GM12878 (cell line): ENCODE measurements at regions of chrX and their contacts with region 1.

Region 1: GRCh38 chrX:57121162-57121741 is at the start of gene SPIN2B:
- DNase-seq: peak; percentile 51
- ATAC-seq: peak; percentile 99
- H3K4me3 ChIP-seq: peak within 1 kb of the TSS; percentile 65
- H3K27ac ChIP-seq: peak within 1 kb of the TSS; percentile 65
- H3K4me1 ChIP-seq: no peaks in the 10 kb centered on the region
- H3K27me3 ChIP-seq: no peaks in the 10 kb centered on the region
- CTCF ChIP-seq: no peak
- EP300 ChIP-seq: no peak
- POLR2A ChIP-seq: peak; percentile 86
- RAD21 ChIP-seq: no peak
- polyA plus RNA-seq, gene SPIN2B: 2.7 to 3.7 TPM

Region 2: GRCh38 chrX:56757327-56757726 is 363.9 kb before region 1 on chrX:
- CTCF ChIA-PET with region 1: no interaction called
- POLR2A ChIA-PET with region 1: no interaction called
- RAD21 ChIA-PET with region 1: no interaction called
- SMC1A ChIA-PET with region 1: no interaction called
- in situ Hi-C with region 1: no loop called
- intact Hi-C with region 1: loop called (anchors 10 kb)
- DNase-seq: no peak
- ATAC-seq: peak; percentile 66
- H3K4me3 ChIP-seq: no peak overlapping the region
- H3K27ac ChIP-seq: no peak overlapping the region
- H3K4me1 ChIP-seq: peaks cover 6% of the 10 kb centered on the region
- H3K27me3 ChIP-seq: no peaks in the 10 kb centered on the region
- CTCF ChIP-seq: no peak
- EP300 ChIP-seq: no peak
- POLR2A ChIP-seq: no peak
- RAD21 ChIP-seq: no peak

Region 3: DNA sequence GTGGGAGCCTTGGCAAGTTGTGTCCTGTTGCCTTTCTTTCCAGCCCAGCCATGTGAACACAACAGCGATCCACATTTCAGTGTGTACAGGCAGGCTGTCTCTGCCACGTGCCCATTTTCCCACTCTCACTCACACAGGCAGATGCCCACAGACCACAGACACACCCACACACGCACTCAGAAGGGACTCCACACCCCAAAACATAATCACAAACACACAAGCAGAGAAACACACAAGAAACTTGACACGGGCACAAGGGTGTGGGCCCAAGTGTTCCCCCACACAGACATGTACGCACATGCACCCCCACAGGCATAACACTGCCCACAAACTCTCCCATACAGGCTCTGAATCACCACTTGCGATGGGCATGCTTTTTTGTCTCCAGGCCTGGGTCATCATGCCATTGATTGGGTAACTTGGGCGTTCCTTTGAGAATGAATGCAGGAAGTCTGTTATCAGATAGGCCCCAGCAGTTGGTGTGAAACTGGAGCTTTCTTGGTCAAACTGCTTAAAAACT is 307.9 kb before region 1 on chrX:
- CTCF ChIA-PET with region 1: no interaction called
- POLR2A ChIA-PET with region 1: no interaction called
- RAD21 ChIA-PET with region 1: no interaction called
- SMC1A ChIA-PET with region 1: no interaction called
- in situ Hi-C with region 1: no loop called
- intact Hi-C with region 1: loop called (anchors 10 kb)
- DNase-seq: no peak
- ATAC-seq: peak; percentile 78
- H3K4me3 ChIP-seq: peak overlapping the region; percentile 42; the same call in 1 of the 2 replicates
- H3K27ac ChIP-seq: peak overlapping the region; percentile 76
- H3K4me1 ChIP-seq: peaks cover 8% of the 10 kb centered on the region
- H3K27me3 ChIP-seq: no peaks in the 10 kb centered on the region
- CTCF ChIP-seq: no peak
- EP300 ChIP-seq: no peak
- POLR2A ChIP-seq: no peak
- RAD21 ChIP-seq: no peak

Region 4: DNA sequence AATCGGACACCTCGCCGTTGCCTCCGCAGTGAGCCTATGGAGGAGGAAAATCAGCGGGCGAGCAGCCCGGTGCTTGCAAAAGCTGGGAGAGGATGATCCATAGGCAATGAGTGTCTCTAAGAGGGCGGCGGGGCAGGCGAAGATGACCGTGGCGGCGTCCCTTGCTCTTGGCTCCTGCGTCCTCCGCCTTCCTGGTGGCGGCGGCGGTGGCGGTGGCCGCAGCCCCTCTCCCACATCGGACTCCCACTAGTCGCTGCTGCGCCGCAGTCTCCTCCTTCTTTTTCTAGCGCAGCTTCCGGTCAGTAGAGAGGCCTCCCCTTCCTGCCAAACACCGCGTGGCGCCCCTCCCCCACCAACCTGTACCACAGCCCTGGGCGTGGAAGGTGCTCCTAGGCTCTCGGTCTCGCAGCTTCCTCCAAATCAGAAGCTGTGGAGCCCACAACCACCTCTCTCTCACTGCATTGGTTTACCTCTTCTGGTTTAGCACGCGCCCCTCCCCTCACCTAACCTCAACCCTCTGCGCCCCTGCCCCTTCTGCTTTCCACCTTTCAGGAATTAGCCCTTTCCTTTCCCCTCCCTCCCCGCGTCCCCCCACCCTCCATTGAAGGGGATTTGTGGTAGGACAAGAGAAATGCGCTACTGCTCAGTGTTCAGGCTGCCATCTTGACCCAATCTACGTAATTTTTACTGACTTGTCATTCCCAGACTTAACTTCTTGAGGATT is 125.8 kb before region 1 on chrX and contains the start of gene SPIN3:
- CTCF ChIA-PET with region 1: no interaction called
- POLR2A ChIA-PET with region 1: interaction called, 3 read pairs
- RAD21 ChIA-PET with region 1: interaction called, 3 read pairs
- SMC1A ChIA-PET with region 1: no interaction called
- in situ Hi-C with region 1: loop called (anchors 25 kb)
- intact Hi-C with region 1: loop called (anchors 1 kb)
- DNase-seq: peak; percentile 56
- ATAC-seq: peak; percentile 95
- H3K4me3 ChIP-seq: peak within 1 kb of the TSS; percentile 72
- H3K27ac ChIP-seq: peak within 1 kb of the TSS; percentile 45
- H3K4me1 ChIP-seq: no peaks in the 10 kb centered on the region; the same call in 1 of the 2 replicates
- H3K27me3 ChIP-seq: no peaks in the 10 kb centered on the region
- CTCF ChIP-seq: no peak
- EP300 ChIP-seq: no peak
- POLR2A ChIP-seq: peak; percentile 84
- RAD21 ChIP-seq: no peak
- polyA plus RNA-seq, gene SPIN3: 2.1 to 2.4 TPM

Region 5: DNA sequence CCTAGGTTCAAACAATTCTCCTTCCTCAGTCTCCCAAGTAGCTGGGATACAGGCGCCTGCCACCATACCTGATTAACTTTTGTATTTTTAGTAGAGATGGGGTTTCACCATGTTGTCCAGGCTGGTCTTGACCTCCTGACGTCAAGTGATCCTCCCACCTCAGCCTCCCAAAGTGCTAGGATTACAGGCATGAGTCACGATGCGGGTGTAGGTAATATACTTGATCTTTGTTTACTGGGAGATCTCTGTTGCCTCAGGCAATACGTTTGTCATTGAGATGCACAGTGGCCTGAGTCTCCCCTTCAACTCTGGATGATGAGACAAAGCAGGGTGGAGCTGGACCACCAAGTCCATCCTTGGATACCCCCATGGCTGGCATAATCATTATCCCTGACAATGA is 81.2 kb before region 1 on chrX:
- CTCF ChIA-PET with region 1: no interaction called
- POLR2A ChIA-PET with region 1: no interaction called
- RAD21 ChIA-PET with region 1: no interaction called
- SMC1A ChIA-PET with region 1: no interaction called
- in situ Hi-C with region 1: no loop called
- intact Hi-C with region 1: no loop called
- DNase-seq: no peak
- ATAC-seq: no peak
- H3K4me3 ChIP-seq: no peak overlapping the region
- H3K27ac ChIP-seq: no peak overlapping the region
- H3K4me1 ChIP-seq: no peaks in the 10 kb centered on the region
- H3K27me3 ChIP-seq: no peaks in the 10 kb centered on the region
- CTCF ChIP-seq: no peak
- EP300 ChIP-seq: no peak
- POLR2A ChIP-seq: no peak
- RAD21 ChIP-seq: no peak

Region 6: GRCh38 chrX:57134702-57135101 is 13.4 kb after region 1 on chrX:
- CTCF ChIA-PET with region 1: no interaction called
- POLR2A ChIA-PET with region 1: no interaction called
- RAD21 ChIA-PET with region 1: no interaction called
- SMC1A ChIA-PET with region 1: no interaction called
- in situ Hi-C with region 1: no loop called
- intact Hi-C with region 1: no loop called
- DNase-seq: no peak
- ATAC-seq: no peak
- H3K4me3 ChIP-seq: no peak overlapping the region
- H3K27ac ChIP-seq: no peak overlapping the region
- H3K4me1 ChIP-seq: no peaks in the 10 kb centered on the region
- H3K27me3 ChIP-seq: no peaks in the 10 kb centered on the region
- CTCF ChIP-seq: no peak
- EP300 ChIP-seq: no peak
- POLR2A ChIP-seq: no peak
- RAD21 ChIP-seq: no peak

Region 7: GRCh38 chrX:57286507-57287251 is 165.4 kb after region 1 on chrX and contains the start of gene FAAH2:
- CTCF ChIA-PET with region 1: no interaction called
- POLR2A ChIA-PET with region 1: interaction called, 4 read pairs
- RAD21 ChIA-PET with region 1: interaction called, 3 read pairs
- SMC1A ChIA-PET with region 1: no interaction called
- in situ Hi-C with region 1: no loop called
- intact Hi-C with region 1: loop called (anchors 10 kb)
- DNase-seq: peak; percentile 23
- ATAC-seq: peak; percentile 94
- H3K4me3 ChIP-seq: peak within 1 kb of the TSS; percentile 47
- H3K27ac ChIP-seq: peak within 1 kb of the TSS; percentile 15
- H3K4me1 ChIP-seq: no peaks in the 10 kb centered on the region
- H3K27me3 ChIP-seq: no peaks in the 10 kb centered on the region
- CTCF ChIP-seq: 0 out of 6 replicates have a peak, but pooled peaks of 1 of the 3 experiments have one; percentile 5
- EP300 ChIP-seq: peak in 1 of 2 experiments; percentile 30; a peak in 1 of 4 replicates
- POLR2A ChIP-seq: no peak
- RAD21 ChIP-seq: no peak
- polyA plus RNA-seq, gene FAAH2: 1.5 to 2.4 TPM